K562 (cell line): ENCODE measurements at regions of chr22 and their contacts with region 1.

Region 1: DNA sequence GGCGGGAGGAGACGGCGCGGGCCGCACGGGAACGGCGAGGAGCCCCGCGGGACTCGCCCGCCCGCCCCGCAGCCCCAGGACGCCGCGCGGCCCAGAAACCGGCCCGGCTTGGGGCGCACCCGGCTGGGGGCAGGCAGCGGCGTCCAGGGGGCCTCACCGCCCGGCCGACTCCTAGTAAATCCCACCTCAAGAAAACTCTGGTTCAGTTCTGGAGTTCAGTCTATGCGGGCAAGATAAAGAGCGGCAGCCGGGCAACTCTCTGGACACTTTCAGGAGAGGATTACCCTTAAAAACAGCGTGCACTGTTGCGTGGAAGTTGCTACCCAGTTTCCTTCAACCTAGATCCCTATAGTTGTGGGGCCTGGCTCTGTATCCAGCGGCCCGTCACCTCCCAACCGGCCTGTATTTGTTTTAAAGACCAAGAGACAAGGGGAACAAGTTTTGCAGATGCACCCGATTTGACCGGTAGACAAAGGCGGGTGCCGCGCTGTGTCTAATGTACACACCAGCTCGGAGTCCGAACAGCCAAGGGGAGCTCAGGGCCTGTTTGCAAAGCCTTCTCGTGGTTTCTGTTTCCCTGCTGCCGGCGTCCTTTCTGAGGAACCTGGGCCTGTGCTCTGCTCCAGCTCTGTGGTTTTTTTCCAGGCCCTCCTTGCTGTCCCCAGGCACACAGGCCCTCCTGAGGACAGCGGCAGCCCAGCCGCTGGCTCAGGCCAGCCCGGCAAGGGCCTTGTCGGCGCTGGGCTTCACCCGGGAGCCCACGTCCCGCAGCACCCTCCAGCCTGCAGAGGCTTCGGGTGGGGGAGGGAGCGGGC is 1.1 kb downstream of the TBX1 start:
- DNase-seq: peak in 3 of 4 experiments; percentile 67 to 71 (median 70)
- ATAC-seq: peak; percentile 28
- H3K4me3 ChIP-seq: peak overlapping the region; percentile 36
- H3K27ac ChIP-seq: peak overlapping the region; percentile 13; the same call in 2 of the 3 replicates
- H3K4me1 ChIP-seq: peaks cover 18 to 93% of the 10 kb centered on the region in 2 experiments; a peak in 4 of 5 replicates
- H3K27me3 ChIP-seq: peaks cover 11 to 34% of the 10 kb centered on the region in 2 experiments; a peak in 4 of 5 replicates
- CTCF ChIP-seq: no peak
- EP300 ChIP-seq: no peak
- POLR2A ChIP-seq: no peak
- RAD21 ChIP-seq: no peak

Region 2: GRCh38 chr22:19772422-19773324 is 11.0 kb after region 1 on chr22:
- CTCF ChIA-PET with region 1: interaction called, 9 read pairs
- POLR2A ChIA-PET with region 1: interaction called, 78 read pairs
- in situ Hi-C with region 1: no loop called
- intact Hi-C with region 1: no loop called
- DNase-seq: peak; percentile 65 to 73 (median 69)
- ATAC-seq: peak; percentile 54
- H3K4me3 ChIP-seq: no peak overlapping the region
- H3K27ac ChIP-seq: peak overlapping the region; percentile 11; the same call in 1 of the 3 replicates
- H3K4me1 ChIP-seq: peaks cover 38 to 77% of the 10 kb centered on the region in 2 experiments
- H3K27me3 ChIP-seq: peaks cover 0 to 9% of the 10 kb centered on the region in 2 experiments; a peak in 2 of 5 replicates
- CTCF ChIP-seq: peak in 2 of 3 experiments; percentile 34 to 37; a peak in 2 of 6 replicates
- EP300 ChIP-seq: no peak
- POLR2A ChIP-seq: no peak
- RAD21 ChIP-seq: peak in 1 of 2 experiments; percentile 51; a peak in 2 of 4 replicates

Region 3: GRCh38 chr22:19779685-19780268 is 18.1 kb after region 1 on chr22:
- CTCF ChIA-PET with region 1: interaction called, 4 read pairs
- POLR2A ChIA-PET with region 1: interaction called, 78 read pairs
- in situ Hi-C with region 1: no loop called
- intact Hi-C with region 1: no loop called
- DNase-seq: peak in 2 of 4 experiments; percentile 56 to 63
- ATAC-seq: peak; percentile 17
- H3K4me3 ChIP-seq: no peak overlapping the region
- H3K27ac ChIP-seq: peak overlapping the region; percentile 75
- H3K4me1 ChIP-seq: peaks cover 20 to 44% of the 10 kb centered on the region in 2 experiments
- H3K27me3 ChIP-seq: 0 out of 5 replicates have a peak, but pooled peaks cover 0 to 2% of the 10 kb centered on the region in 2 experiments
- CTCF ChIP-seq: 0 out of 6 replicates have a peak, but pooled peaks of 1 of the 3 experiments have one; percentile 3
- EP300 ChIP-seq: no peak
- POLR2A ChIP-seq: no peak
- RAD21 ChIP-seq: no peak

Region 4: GRCh38 chr22:19919701-19920363 is 158.1 kb after region 1 on chr22:
- CTCF ChIA-PET with region 1: no interaction called
- POLR2A ChIA-PET with region 1: no interaction called
- in situ Hi-C with region 1: no loop called
- intact Hi-C with region 1: no loop called
- DNase-seq: no peak
- ATAC-seq: no peak
- H3K4me3 ChIP-seq: no peak overlapping the region
- H3K27ac ChIP-seq: no peak overlapping the region
- H3K4me1 ChIP-seq: peaks cover 5 to 32% of the 10 kb centered on the region in 2 experiments; a peak in 4 of 5 replicates
- H3K27me3 ChIP-seq: no peaks in the 10 kb centered on the region
- CTCF ChIP-seq: no peak
- EP300 ChIP-seq: no peak
- POLR2A ChIP-seq: no peak
- RAD21 ChIP-seq: no peak